CD4-positive, alpha-beta memory T cell (primary cell): ENCODE measurements at regions of chr9 and their contacts with region 1.

Region 1: GRCh38 chr9:36008774-36009300 is 27.9 kb upstream of the RECK start:
- DNase-seq: peak; percentile 59 to 74 (median 68)
- H3K4me3 ChIP-seq: no peak overlapping the region
- H3K4me3 Mint-ChIP-seq: peak overlapping the region in 1 of 8 donors; percentile 22
- H3K27ac ChIP-seq: no peak overlapping the region
- H3K27ac Mint-ChIP-seq: peak overlapping the region in 1 of 7 donors; percentile 10
- H3K4me1 ChIP-seq: peaks cover 3% of the 10 kb centered on the region
- H3K4me1 Mint-ChIP-seq: peaks cover 14 to 17% (median 15%) of the 10 kb centered on the region in 4 donors
- H3K27me3 ChIP-seq: no peaks in the 10 kb centered on the region
- H3K27me3 Mint-ChIP-seq: peaks cover 10 to 23% of the 10 kb centered on the region in 2 donors

Region 2: GRCh38 chr9:34793428-34793827 is 1215.4 kb before region 1 on chr9:
- CTCF ChIA-PET with region 1: no interaction called
- POLR2A ChIA-PET with region 1: no interaction called
- intact Hi-C with region 1: no loop called
- DNase-seq: no peak
- H3K4me3 ChIP-seq: no peak overlapping the region
- H3K4me3 Mint-ChIP-seq: no peak overlapping the region
- H3K27ac ChIP-seq: no peak overlapping the region
- H3K27ac Mint-ChIP-seq: no peak overlapping the region
- H3K4me1 ChIP-seq: no peaks in the 10 kb centered on the region
- H3K4me1 Mint-ChIP-seq: no peaks in the 10 kb centered on the region
- H3K27me3 ChIP-seq: peaks cover 10% of the 10 kb centered on the region
- H3K27me3 Mint-ChIP-seq: peaks cover 31 to 38% of the 10 kb centered on the region in 2 donors

Region 3: GRCh38 chr9:35954942-35955546 is 53.8 kb before region 1 on chr9:
- CTCF ChIA-PET with region 1: interaction called, 6 read pairs
- POLR2A ChIA-PET with region 1: no interaction called
- intact Hi-C with region 1: loop called (anchors 5 kb)
- DNase-seq: peak; percentile 43 to 68 (median 65)
- H3K4me3 ChIP-seq: no peak overlapping the region
- H3K4me3 Mint-ChIP-seq: peak overlapping the region in 1 of 8 donors; percentile 44
- H3K27ac ChIP-seq: no peak overlapping the region
- H3K27ac Mint-ChIP-seq: no peak overlapping the region
- H3K4me1 ChIP-seq: peaks cover 6% of the 10 kb centered on the region
- H3K4me1 Mint-ChIP-seq: peaks cover 5 to 7% (median 6%) of the 10 kb centered on the region in 4 donors
- H3K27me3 ChIP-seq: no peaks in the 10 kb centered on the region
- H3K27me3 Mint-ChIP-seq: peaks cover 4 to 9% of the 10 kb centered on the region in 2 donors

Region 4: GRCh38 chr9:35981699-35982098 is 27.1 kb before region 1 on chr9:
- CTCF ChIA-PET with region 1: interaction called, 10 read pairs
- POLR2A ChIA-PET with region 1: no interaction called
- intact Hi-C with region 1: no loop called
- DNase-seq: no peak
- H3K4me3 ChIP-seq: no peak overlapping the region
- H3K4me3 Mint-ChIP-seq: no peak overlapping the region
- H3K27ac ChIP-seq: no peak overlapping the region
- H3K27ac Mint-ChIP-seq: no peak overlapping the region
- H3K4me1 ChIP-seq: no peaks in the 10 kb centered on the region
- H3K4me1 Mint-ChIP-seq: peaks cover 0 to 7% (median 0%) of the 10 kb centered on the region in 4 donors
- H3K27me3 ChIP-seq: peaks cover 16% of the 10 kb centered on the region
- H3K27me3 Mint-ChIP-seq: peaks cover 35 to 51% of the 10 kb centered on the region in 2 donors

Region 5: DNA sequence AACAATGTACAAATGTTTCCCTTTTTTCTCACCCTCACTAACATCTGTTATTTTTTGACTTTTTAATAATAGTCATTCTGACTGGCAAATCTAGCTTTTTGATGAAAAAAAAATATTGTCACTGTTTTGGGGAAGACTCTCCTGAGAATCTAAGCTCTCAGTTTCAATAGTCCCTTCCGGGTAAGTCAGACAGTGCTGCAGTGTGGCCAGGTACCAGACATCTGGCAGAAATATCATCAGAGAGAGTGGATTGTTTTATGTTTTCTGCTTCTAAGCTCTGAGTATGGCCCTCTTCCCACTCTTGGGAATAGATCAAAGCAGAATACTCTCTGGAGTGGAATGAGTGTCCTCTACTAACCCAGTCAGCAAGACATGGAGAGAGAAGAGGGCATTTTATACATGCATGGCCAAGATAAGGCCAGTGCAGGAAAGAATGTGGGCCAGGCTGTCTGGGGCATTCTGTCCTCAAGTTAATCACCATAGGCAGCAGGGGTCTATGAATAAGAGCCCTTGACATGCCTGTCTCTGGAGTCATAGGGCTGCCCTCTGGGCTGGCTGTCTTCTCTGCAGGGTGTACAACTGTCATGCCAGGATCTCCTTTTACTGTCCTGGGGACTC is 12.4 kb before region 1 on chr9:
- CTCF ChIA-PET with region 1: interaction called, 21 read pairs
- POLR2A ChIA-PET with region 1: no interaction called
- intact Hi-C with region 1: no loop called
- DNase-seq: no peak
- H3K4me3 ChIP-seq: no peak overlapping the region
- H3K4me3 Mint-ChIP-seq: no peak overlapping the region
- H3K27ac ChIP-seq: no peak overlapping the region
- H3K27ac Mint-ChIP-seq: no peak overlapping the region
- H3K4me1 ChIP-seq: no peaks in the 10 kb centered on the region
- H3K4me1 Mint-ChIP-seq: no peaks in the 10 kb centered on the region
- H3K27me3 ChIP-seq: no peaks in the 10 kb centered on the region
- H3K27me3 Mint-ChIP-seq: peaks cover 14 to 32% of the 10 kb centered on the region in 2 donors